CD8-positive, alpha-beta memory T cell (primary cell): ENCODE measurements at regions of chr2 and their contacts with region 1.

Region 1: DNA sequence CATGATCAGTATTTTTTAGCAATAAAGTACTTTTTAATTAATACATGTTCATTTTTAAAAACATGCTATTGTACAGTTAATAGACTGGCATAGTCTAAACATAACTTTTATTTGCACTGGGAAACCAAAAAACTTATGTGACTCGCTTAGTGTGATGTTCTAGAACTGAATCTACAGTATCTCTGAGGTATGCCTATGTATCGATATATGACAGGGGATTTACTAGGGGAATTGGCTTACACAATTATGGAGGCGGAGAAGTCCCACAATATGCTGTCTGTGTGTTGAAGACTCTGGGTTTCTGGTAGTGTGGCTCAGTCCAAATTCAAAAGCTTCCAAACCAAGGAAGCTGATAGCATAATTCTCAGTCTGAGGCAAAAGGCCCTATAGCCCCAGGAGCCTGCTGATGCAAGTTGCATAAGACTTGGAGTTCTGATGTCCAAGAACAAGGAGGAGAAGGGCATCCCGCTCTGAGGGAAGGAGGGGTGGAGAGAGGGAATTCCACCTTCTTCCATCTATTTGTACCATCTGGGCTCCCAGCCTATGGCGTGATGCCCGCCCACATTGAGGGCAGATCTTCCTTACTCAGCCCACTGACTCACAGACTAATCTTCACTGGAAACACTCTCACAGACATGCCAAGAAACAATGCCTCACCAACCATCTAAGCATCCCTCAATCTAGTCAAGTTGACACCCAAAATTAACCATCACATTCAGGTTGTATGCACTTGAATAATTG is 27.5 kb downstream of the ZNF638 start:
- DNase-seq: no peak
- H3K4me3 ChIP-seq: no peak overlapping the region
- H3K4me3 Mint-ChIP-seq: no peak overlapping the region
- H3K27ac ChIP-seq: no peak overlapping the region
- H3K27ac Mint-ChIP-seq: peak overlapping the region in 4 of 8 donors; percentile 13 to 50 (median 20)
- H3K4me1 ChIP-seq: no peaks in the 10 kb centered on the region
- H3K4me1 Mint-ChIP-seq: peaks cover 40 to 64% (median 63%) of the 10 kb centered on the region in 3 donors
- H3K27me3 ChIP-seq: no peaks in the 10 kb centered on the region
- H3K27me3 Mint-ChIP-seq: no peaks in the 10 kb centered on the region

Region 2: DNA sequence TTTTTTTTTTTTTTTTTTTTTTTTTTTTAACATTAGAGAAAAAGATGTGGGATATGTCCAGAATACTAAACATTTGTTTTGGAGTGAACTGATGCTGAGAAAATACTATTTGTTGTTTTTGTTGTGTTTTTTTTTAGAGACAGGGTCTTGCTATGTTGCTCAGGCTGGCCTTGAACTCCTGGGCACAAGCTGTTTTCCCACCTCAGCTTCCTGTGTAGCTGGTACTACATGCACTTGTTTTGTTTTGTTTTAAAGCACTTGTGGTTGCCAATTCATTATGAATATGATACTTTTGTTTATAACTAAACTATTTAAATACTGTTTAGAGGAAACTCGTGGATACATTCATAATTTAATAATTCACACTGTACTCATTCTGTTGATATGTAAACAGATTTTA is 60.9 kb after region 1 on chr2:
- CTCF ChIA-PET with region 1: no interaction called
- POLR2A ChIA-PET with region 1: interaction called, 17 read pairs
- DNase-seq: no peak
- H3K4me3 ChIP-seq: no peak overlapping the region
- H3K4me3 Mint-ChIP-seq: no peak overlapping the region
- H3K27ac ChIP-seq: no peak overlapping the region
- H3K27ac Mint-ChIP-seq: no peak overlapping the region
- H3K4me1 ChIP-seq: peaks cover 6% of the 10 kb centered on the region
- H3K4me1 Mint-ChIP-seq: peaks cover 16 to 44% (median 25%) of the 10 kb centered on the region in 3 donors
- H3K27me3 ChIP-seq: no peaks in the 10 kb centered on the region
- H3K27me3 Mint-ChIP-seq: no peaks in the 10 kb centered on the region